Heart right ventricle (tissue), 16 donors: ENCODE measurements at regions of chr1 and their contacts with region 1.

Region 1: DNA sequence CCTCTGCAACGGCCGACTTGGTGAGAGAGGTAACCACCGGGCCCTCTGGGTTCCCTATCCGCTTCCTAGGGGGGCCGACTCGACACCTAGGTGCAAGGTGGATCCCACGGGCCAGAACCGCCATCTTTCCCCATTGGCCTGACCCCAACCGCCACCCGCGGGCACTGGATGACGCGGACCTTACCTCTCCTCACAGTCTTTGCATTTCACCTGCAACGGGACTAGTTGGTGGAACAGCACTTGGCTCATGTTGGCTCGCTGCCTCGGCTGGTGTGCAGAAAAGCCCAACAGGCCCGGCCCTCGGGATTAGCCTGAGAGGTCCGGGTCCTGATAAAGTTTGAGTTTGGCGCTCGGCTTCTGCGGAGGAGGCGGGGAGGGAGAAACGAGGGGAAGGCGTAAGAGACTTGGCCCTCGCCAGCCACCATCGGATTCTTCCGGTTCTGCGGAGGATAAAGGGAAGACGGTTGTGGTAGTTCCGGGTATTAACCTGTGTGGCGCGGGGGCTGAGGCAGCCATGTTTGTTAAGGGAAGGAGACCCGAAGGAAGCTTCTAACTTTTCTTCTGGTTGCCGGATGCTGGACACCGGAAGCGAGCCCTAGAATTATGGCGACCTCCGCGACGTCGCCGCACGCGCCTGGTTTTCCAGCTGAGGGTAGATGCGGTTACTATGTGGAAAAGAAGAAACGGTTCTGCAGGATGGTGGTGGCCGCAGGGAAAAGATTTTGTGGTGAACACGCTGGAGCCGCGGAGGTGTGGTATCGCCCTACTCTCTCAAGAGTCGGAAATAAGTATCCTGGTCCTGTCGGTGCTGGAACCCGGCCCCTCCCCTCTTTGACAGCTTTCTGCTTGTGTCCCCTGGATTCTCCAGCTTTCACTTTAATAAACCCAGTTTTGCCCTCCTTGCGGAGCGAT is at the starts of genes SASS6 and TRMT13:
- DNase-seq: peak; percentile 94 to 98
- ATAC-seq: peak; percentile 99 to 100 (median 100)
- H3K4me3 ChIP-seq: peak within 1 kb of the TSS; percentile 65 to 93 (median 82)
- H3K27ac ChIP-seq: peak within 1 kb of the TSS in 9 of 10 donors; percentile 59 to 86 (median 76)
- H3K4me1 ChIP-seq: peaks cover 5 to 41% (median 27%) of the 10 kb centered on the region in 9 donors
- H3K27me3 ChIP-seq: no peaks in the 10 kb centered on the region
- CTCF ChIP-seq: peak in 1 of 9 donors; percentile 17
- total RNA-seq, gene SASS6: 0.95 to 2.7 (median 1.7) TPM
- total RNA-seq, gene TRMT13: 4.1 to 8.2 (median 5.4) TPM

Region 2: GRCh38 chr1:99119188-99119587 is 1013.6 kb before region 1 on chr1:
- intact Hi-C with region 1: no loop called
- DNase-seq: no peak
- ATAC-seq: no peak
- H3K4me3 ChIP-seq: no peak overlapping the region
- H3K27ac ChIP-seq: no peak overlapping the region
- H3K4me1 ChIP-seq: no peaks in the 10 kb centered on the region
- H3K27me3 ChIP-seq: no peaks in the 10 kb centered on the region
- CTCF ChIP-seq: no peak

Region 3: GRCh38 chr1:99808391-99809115 is 324.3 kb before region 1 on chr1:
- intact Hi-C with region 1: loop called in 2 of 10 experiments (anchors 10 kb)
- DNase-seq: peak in 1 of 2 donors; percentile 54
- ATAC-seq: peak; percentile 87 to 96 (median 90)
- H3K4me3 ChIP-seq: peak overlapping the region in 4 of 10 donors; percentile 9 to 32 (median 16)
- H3K27ac ChIP-seq: peak overlapping the region in 4 of 10 donors; percentile 26 to 61 (median 45)
- H3K4me1 ChIP-seq: peaks cover 0 to 13% (median 6%) of the 10 kb centered on the region in 9 donors
- H3K27me3 ChIP-seq: peaks cover 0 to 10% (median 8%) of the 10 kb centered on the region in 7 donors
- CTCF ChIP-seq: peak; percentile 48 to 77 (median 71)

Region 4: GRCh38 chr1:99869304-99869703 is 263.5 kb before region 1 on chr1:
- intact Hi-C with region 1: loop called in 1 of 10 experiments (anchors 10 kb)
- DNase-seq: no peak
- ATAC-seq: no peak
- H3K4me3 ChIP-seq: no peak overlapping the region
- H3K27ac ChIP-seq: no peak overlapping the region
- H3K4me1 ChIP-seq: peaks cover 0 to 10% (median 0%) of the 10 kb centered on the region in 9 donors
- H3K27me3 ChIP-seq: no peaks in the 10 kb centered on the region
- CTCF ChIP-seq: no peak

Region 5: DNA sequence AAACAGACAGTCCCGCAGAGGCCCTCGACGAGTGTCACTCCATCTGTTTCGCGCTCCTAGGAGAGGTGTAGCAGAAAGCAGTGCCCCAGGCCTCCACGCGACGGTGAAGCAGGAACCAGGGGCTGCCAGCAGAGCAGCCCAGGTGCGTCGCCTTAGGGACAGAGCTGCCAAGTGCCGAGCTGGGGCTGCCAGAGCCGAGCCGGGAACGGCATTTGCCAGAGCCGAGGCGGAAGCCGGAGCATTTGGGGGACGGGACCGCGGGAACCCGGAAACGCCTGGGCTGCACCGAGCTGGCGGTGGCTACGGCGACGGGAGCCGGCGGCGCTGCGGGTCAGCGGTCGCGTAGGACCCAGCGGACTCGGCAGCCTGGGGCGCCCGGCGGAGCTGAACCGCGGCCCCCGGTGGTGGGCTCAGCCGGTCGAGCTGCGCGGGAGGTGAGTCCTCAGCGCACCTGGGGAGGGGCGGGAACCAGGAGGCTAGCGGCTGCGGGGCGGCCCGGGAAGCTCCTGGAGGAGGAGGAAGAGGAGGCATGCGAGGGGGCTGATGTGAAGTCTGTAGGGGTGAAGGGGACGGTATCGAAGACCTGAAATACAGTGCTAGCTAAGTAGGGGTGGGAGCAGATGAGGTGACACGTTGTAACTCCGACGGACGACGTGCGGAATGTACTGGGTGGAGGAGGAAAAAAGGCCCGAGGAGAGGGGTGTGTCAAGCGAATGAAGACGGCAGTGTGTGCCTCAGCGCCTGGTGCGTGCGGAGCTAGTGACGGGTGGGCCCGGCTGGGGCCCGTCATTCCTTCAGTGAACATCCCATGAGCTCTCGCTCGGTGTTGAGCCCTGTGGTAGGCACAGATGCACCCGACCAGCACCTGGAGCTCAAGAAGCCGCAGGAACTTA is 162.8 kb before region 1 on chr1 and contains the start of gene SLC35A3:
- intact Hi-C with region 1: loop called in 2 of 10 experiments (anchors 10 kb)
- DNase-seq: peak; percentile 72 to 82
- ATAC-seq: peak; percentile 96 to 99 (median 97)
- H3K4me3 ChIP-seq: peak within 1 kb of the TSS; percentile 67 to 98 (median 86)
- H3K27ac ChIP-seq: peak within 1 kb of the TSS in 9 of 10 donors; percentile 51 to 91 (median 74)
- H3K4me1 ChIP-seq: peaks cover 0 to 24% (median 11%) of the 10 kb centered on the region in 9 donors
- H3K27me3 ChIP-seq: no peaks in the 10 kb centered on the region
- CTCF ChIP-seq: peak in 1 of 9 donors; percentile 6
- total RNA-seq, gene SLC35A3: 5.3 to 9.4 (median 8.1) TPM

Region 6: DNA sequence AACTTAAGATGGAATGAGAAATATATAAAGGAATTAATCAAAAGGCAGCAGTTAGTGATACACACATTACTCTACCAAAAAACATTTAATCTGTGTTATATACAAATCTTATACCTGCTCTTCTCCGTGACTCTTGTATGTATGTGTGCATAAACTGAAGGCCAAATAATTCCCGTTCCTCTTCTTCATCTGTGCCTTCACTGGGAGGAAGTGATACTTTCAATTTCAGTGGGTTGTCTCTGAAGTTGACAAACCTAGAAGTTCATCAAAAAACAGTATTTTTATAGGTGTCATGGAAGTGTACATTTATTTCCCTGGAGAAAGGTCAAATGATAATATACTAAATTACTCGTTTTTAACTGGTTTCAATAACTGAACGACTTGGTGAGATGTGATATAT is 19.4 kb after region 1 on chr1:
- intact Hi-C with region 1: no loop called
- DNase-seq: no peak
- ATAC-seq: no peak
- H3K4me3 ChIP-seq: no peak overlapping the region
- H3K27ac ChIP-seq: peak overlapping the region in 1 of 10 donors; percentile 5
- H3K4me1 ChIP-seq: no peaks in the 10 kb centered on the region
- H3K27me3 ChIP-seq: no peaks in the 10 kb centered on the region
- CTCF ChIP-seq: no peak

Region 7: DNA sequence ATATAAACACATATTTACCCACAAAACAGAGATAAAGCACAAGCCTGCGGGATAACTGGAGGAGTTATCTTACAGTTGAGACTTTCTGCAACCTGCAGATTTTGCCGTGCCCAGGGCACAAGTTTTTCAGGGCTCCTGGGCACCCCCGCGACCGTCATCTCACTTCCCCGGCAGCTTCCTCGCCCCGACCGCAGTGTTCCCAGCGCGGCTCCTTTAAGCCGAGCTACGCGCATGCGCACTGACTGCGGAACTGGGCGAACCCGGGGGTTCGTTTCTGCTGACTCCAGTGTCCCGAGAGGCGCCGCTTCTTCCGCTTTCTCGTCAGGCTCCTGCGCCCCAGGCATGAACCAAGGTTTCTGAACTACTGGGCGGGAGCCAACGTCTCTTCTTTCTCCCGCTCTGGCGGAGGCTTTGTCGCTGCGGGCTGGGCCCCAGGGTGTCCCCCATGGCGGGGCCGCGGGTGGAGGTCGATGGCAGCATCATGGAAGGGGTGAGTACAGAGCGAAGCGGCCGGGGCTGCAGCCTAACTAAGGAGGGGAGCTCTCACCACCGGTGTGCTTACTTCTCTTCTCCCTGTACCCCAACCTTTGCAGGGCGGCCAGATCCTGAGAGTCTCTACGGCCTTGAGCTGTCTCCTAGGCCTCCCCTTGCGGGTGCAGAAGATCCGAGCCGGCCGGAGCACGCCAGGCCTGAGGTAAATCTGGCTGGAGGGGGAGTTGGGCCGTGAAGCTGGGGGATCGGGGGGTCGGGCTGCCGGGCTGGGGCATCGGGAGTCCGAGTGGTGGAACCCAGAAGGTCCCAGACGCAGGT is 133.3 kb after region 1 on chr1 and contains the start of gene RTCA:
- intact Hi-C with region 1: loop called in 3 of 10 experiments (anchors 2 to 10 kb)
- DNase-seq: peak; percentile 96 to 98
- ATAC-seq: peak; percentile 99 to 100 (median 100)
- H3K4me3 ChIP-seq: peak within 1 kb of the TSS; percentile 59 to 99 (median 96)
- H3K27ac ChIP-seq: peak within 1 kb of the TSS in 9 of 10 donors; percentile 79 to 97 (median 88)
- H3K4me1 ChIP-seq: peaks cover 4 to 42% (median 35%) of the 10 kb centered on the region in 9 donors
- H3K27me3 ChIP-seq: no peaks in the 10 kb centered on the region
- CTCF ChIP-seq: no peak
- total RNA-seq, gene RTCA: 30.1 to 44.8 (median 36.9) TPM

Region 8: DNA sequence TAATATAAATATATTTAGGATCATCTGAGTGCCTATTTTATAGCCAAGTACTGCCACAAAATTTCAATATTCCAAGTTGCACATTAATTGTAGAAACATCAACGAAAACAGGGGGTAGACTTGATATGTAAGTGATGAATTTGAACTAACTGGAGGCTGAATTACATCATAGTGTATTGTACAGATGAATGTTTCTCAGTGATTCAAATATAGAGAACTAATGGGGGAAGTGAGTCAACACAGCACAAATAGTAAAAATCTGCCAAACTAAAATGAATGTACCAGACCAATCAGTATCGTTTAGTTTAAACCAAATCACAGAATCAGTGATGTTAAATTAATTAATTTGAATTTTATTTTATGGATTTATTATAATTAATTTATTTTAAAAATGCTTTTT is 176.0 kb after region 1 on chr1:
- intact Hi-C with region 1: no loop called
- DNase-seq: no peak
- ATAC-seq: no peak
- H3K4me3 ChIP-seq: no peak overlapping the region
- H3K27ac ChIP-seq: no peak overlapping the region
- H3K4me1 ChIP-seq: no peaks in the 10 kb centered on the region
- H3K27me3 ChIP-seq: no peaks in the 10 kb centered on the region
- CTCF ChIP-seq: no peak

Region 9: GRCh38 chr1:100895540-100896483 is 763.0 kb after region 1 on chr1 and contains the start of gene SLC30A7:
- intact Hi-C with region 1: loop called in 1 of 10 experiments (anchors 5 kb)
- DNase-seq: peak; percentile 96 to 97
- ATAC-seq: peak; percentile 95 to 97 (median 97)
- H3K4me3 ChIP-seq: peak within 1 kb of the TSS; percentile 62 to 93 (median 79)
- H3K27ac ChIP-seq: peak within 1 kb of the TSS; percentile 74 to 97 (median 95)
- H3K4me1 ChIP-seq: peaks cover 3 to 37% (median 22%) of the 10 kb centered on the region in 9 donors
- H3K27me3 ChIP-seq: no peaks in the 10 kb centered on the region
- CTCF ChIP-seq: no peak
- total RNA-seq, gene SLC30A7: 4.0 to 16.2 (median 5.8) TPM